GM12878 (cell line): ENCODE measurements at regions of chr13 and their contacts with region 1.

Region 1: DNA sequence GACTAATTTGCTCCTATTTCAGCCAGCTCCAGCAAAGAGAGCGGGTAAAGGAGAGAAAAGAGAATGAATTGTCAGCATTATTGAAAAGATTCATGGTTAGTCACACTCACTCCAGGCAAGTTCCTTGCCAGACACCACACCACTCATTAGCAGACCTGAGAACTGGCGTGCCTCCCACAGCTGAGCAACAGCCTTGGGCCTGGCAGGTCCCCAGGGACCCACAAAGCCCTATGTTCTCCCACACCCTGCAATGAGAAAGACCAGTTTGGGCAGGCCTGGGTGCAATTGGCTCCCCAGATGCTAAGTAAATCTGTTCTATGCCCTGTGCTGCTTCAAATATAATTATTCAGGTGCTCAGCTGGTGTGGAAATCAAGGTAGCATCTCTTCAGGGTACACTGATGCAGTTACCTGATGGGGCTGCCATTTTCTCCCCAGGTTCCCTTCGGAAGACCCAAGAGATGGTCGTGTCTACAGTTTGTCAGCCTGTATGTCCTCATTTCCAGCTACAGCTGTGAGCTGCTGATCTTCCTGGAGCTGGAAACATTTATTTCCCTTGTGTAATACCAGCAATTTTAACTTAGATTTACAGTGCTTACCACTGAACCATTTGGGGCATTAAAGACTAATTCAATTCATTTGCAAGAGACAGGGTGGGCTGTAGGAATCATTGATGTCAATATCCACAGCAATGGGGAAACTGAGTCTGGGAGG is 405.0 kb downstream of the COG6 start:
- DNase-seq: peak; percentile 97
- ATAC-seq: peak; percentile 86
- H3K4me3 ChIP-seq: no peak overlapping the region
- H3K27ac ChIP-seq: peak overlapping the region; percentile 80
- H3K4me1 ChIP-seq: peaks cover 28% of the 10 kb centered on the region
- H3K27me3 ChIP-seq: no peaks in the 10 kb centered on the region
- CTCF ChIP-seq: no peak
- EP300 ChIP-seq: peak; percentile 65 to 79; a peak in 2 of 4 replicates
- POLR2A ChIP-seq: no peak
- RAD21 ChIP-seq: no peak

Region 2: GRCh38 chr13:39760521-39760920 is 299.9 kb before region 1 on chr13:
- CTCF ChIA-PET with region 1: no interaction called
- POLR2A ChIA-PET with region 1: no interaction called
- RAD21 ChIA-PET with region 1: no interaction called
- SMC1A ChIA-PET with region 1: no interaction called
- in situ Hi-C with region 1: no loop called
- intact Hi-C with region 1: loop called (anchors 5 kb)
- DNase-seq: no peak
- ATAC-seq: peak; percentile 92
- H3K4me3 ChIP-seq: no peak overlapping the region
- H3K27ac ChIP-seq: no peak overlapping the region
- H3K4me1 ChIP-seq: no peaks in the 10 kb centered on the region
- H3K27me3 ChIP-seq: no peaks in the 10 kb centered on the region
- CTCF ChIP-seq: no peak
- EP300 ChIP-seq: peak; percentile 44 to 71; a peak in 2 of 4 replicates
- POLR2A ChIP-seq: no peak
- RAD21 ChIP-seq: no peak

Region 3: DNA sequence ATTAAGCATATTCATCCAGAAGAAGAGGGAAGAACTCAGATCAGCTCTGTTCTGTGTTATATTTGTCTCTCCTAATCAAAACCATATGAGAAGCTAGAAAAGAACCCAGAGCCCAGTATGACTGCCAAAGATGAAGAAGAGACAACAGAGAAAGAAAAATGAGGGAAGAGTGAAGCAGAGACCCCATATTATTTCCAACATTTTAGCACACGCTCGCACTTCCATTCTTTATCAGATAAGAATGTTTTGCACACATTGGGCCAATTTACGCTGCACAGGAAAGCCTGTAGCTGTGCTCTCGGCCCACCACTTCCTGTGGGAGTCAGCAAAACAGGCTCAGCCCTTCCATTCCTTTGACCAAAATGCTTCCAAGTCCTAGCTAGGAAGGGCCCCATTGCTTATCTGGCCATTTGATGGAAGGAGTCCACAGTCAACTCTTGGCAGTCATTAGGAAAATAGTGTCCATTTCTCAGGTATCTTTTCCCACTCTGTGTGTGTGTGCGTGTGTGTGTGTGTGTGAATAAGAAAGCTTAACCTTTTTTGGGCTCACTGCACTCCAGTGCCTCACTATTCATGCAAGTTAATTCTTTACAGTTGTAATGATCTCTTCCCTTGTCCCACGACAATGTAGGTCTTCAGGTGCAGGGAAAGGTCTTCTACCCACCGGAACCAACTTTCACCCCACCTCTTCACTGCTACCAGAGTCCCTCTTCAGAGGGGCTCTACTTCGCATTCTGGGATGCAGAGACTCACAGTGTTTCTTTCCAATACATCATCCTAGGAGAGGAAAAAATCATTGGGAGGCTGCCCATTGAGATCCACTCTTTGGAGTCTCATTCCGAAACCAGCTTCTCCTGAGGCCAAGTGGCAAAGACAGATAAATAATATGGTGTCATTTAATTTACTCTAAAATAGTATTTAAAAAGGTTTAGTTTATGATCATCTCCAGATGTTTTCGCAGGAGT is 167.4 kb before region 1 on chr13:
- CTCF ChIA-PET with region 1: no interaction called
- POLR2A ChIA-PET with region 1: no interaction called
- RAD21 ChIA-PET with region 1: no interaction called
- SMC1A ChIA-PET with region 1: no interaction called
- in situ Hi-C with region 1: no loop called
- intact Hi-C with region 1: no loop called
- DNase-seq: no peak
- ATAC-seq: no peak
- H3K4me3 ChIP-seq: no peak overlapping the region
- H3K27ac ChIP-seq: no peak overlapping the region
- H3K4me1 ChIP-seq: no peaks in the 10 kb centered on the region
- H3K27me3 ChIP-seq: no peaks in the 10 kb centered on the region; a peak in 1 of 4 replicates
- CTCF ChIP-seq: no peak
- EP300 ChIP-seq: no peak
- POLR2A ChIP-seq: no peak
- RAD21 ChIP-seq: no peak

Region 4: DNA sequence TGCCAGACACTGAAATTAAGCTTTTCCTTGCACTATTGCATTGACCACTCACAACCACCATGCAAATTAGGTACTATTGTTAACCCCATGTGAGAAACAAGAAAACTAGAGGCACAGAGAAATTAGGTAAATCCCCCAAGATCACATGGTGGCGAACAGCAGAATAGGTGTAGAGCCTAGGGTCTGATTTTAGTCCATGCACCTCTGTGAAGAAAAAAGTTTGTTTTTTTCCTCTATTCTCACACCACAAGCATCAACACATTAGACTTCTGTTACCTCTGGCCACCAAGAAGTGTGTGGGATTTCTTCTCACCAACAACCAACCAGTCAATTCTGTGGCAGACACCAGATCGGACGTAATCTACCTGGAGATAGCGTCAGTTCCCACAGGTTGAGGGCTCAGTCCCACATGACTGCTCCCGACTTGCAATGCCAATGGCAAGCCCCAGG is 13.1 kb before region 1 on chr13:
- CTCF ChIA-PET with region 1: interaction called, 3 read pairs
- POLR2A ChIA-PET with region 1: no interaction called
- RAD21 ChIA-PET with region 1: interaction called, 8 read pairs
- SMC1A ChIA-PET with region 1: interaction called, 22 read pairs
- in situ Hi-C with region 1: no loop called
- intact Hi-C with region 1: loop called (anchors 1 kb)
- DNase-seq: peak; percentile 96
- ATAC-seq: peak; percentile 89
- H3K4me3 ChIP-seq: no peak overlapping the region
- H3K27ac ChIP-seq: peak overlapping the region; percentile 53; the same call in 1 of the 2 replicates
- H3K4me1 ChIP-seq: peaks cover 11% of the 10 kb centered on the region; the same call in 1 of the 2 replicates
- H3K27me3 ChIP-seq: peaks cover 0 to 2% of the 10 kb centered on the region in 2 experiments; a peak in 1 of 4 replicates
- CTCF ChIP-seq: no peak
- EP300 ChIP-seq: peak; percentile 53 to 70; a peak in 2 of 4 replicates
- POLR2A ChIP-seq: no peak
- RAD21 ChIP-seq: no peak